ENCODE measurements at regions of chr16 and their contacts with region 1.

Region 1: DNA sequence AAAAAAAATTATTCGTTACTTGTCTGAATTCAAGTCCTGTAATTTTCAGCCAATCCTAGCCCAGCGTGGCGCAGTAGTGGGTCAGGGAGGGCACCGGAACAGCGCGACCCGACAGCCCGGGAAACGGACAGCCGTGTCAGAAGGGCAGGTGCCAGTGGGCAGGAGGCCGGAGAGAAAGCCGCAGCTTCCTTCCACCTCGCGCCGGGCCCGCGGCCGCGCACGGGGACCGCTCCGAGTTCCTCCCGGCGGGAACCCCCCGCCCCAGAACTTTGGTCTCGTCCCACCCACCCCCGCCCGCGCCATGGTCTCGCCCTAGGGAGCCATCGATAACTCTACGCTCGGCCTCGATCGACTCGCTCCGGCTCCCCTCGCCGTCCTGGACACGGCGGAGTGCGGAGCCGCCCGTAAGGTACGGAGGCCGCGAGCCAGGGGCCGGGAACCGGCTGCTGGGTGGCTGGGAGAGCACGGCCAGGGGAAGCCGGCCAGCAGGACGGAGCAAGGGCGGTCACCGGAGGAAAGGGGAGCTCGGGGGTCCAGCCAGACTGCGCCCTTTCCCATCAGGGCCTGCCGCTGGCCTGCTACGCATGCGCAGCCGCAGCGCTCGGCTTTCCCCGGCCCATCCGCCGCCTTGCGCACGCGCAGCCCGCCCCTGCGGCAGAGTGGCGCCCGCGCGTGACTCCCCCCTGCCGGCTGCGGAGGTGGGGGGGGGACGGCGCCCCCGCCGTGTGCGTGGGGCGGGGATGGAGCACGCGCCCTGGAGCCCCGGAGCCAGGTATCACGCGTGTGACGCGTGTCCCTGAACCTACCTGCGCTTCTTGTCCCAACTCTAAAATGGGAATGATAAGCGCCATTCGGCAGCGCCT is at the start of gene MLST8:
- DNase-seq: peak; percentile 86 to 99 (median 94)
- ATAC-seq: peak; percentile 84 to 86
- H3K4me3 Mint-ChIP-seq: peak within 1 kb of the TSS; percentile 75 to 90 (median 86)
- H3K27ac Mint-ChIP-seq: peak within 1 kb of the TSS; percentile 84 to 95 (median 92)
- H3K4me1 Mint-ChIP-seq: peaks cover 11 to 28% (median 25%) of the 10 kb centered on the region in 4 donors
- H3K27me3 Mint-ChIP-seq: peaks cover 0 to 1% (median 0%) of the 10 kb centered on the region in 5 donors
- polyA plus RNA-seq, gene MLST8: 29.9 to 40.4 (median 30.1) TPM

Region 2: DNA sequence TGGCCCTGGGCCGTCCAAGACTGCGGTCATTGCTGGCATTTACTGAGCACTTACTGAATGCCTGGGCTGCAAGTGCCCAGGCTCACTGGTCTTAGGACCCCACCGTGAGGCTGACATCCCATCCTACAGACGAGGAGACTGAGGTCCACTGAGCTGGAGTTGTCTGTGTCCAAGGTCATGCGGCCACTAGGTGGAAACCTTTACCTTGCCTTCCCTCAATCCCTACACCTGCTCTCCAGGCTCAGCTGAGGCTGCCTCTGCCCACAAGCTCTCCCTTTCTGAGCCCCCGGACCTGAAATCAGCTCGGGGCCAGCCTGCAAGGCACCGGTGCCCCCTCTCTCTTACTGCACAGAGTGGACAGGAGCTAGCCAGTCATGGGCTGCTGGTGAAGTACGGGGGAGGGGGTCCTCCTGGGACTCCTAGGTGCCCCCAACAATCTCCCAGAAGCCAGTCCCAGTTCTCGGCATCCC is 10.4 kb before region 1 on chr16:
- POLR2A ChIA-PET with region 1: interaction called, 12 read pairs
- DNase-seq: peak in 9 of 10 donors; percentile 35 to 80 (median 52)
- ATAC-seq: peak; percentile 79 to 82
- H3K4me3 Mint-ChIP-seq: peak overlapping the region in 9 of 10 donors; percentile 34 to 79 (median 59)
- H3K27ac Mint-ChIP-seq: peak overlapping the region in 3 of 10 donors; percentile 14 to 73 (median 20)
- H3K4me1 Mint-ChIP-seq: peaks cover 2 to 15% (median 7%) of the 10 kb centered on the region in 4 donors
- H3K27me3 Mint-ChIP-seq: peaks cover 6 to 27% (median 18%) of the 10 kb centered on the region in 5 donors

Region 3: GRCh38 chr16:2223375-2224182 is 18.2 kb after region 1 on chr16 and contains the start of gene E4F1:
- POLR2A ChIA-PET with region 1: interaction called, 13 read pairs
- DNase-seq: peak; percentile 92 to 99 (median 98)
- ATAC-seq: peak; percentile 95 to 97
- H3K4me3 Mint-ChIP-seq: peak within 1 kb of the TSS; percentile 79 to 93 (median 88)
- H3K27ac Mint-ChIP-seq: peak within 1 kb of the TSS; percentile 51 to 95 (median 90)
- H3K4me1 Mint-ChIP-seq: peaks cover 0 to 26% (median 13%) of the 10 kb centered on the region in 4 donors
- H3K27me3 Mint-ChIP-seq: no peaks in the 10 kb centered on the region
- polyA plus RNA-seq, gene E4F1: 8.7 to 19.2 (median 10.9) TPM

Region 4: DNA sequence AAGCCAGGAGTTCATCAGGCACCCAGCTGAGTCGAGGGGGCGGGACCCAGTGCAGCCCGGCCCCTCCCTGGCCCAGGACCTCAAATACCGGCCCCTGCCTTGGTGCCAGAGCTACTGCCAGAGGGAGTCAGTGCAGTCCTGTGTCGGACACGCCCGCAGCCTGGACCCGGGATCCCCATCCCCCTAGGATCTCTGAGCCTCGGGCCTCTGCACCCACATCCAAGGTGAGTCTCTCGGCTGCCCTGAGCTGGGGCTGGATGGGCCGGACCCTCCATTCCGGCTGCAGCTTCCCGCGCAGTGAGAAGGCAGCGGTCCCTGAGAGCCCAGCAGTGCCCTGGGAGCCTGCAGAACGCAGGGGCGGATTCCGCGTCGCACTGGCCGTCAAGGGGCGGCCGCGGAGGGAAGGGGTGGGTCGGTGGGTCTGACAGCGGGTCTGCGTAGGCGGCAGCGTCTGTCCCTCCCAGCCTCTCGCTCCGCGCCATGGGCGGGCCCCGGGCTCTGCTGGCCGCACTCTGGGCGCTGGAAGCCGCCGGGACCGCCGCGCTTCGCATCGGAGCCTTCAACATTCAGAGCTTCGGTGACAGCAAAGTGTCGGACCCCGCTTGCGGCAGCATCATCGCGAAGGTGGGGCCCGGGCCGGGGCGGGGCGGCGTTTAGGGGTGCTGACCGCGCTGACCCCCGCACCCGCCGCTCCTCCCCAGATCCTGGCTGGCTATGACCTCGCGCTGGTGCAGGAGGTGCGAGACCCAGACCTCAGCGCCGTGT is 31.2 kb after region 1 on chr16 and contains the start of gene DNASE1L2:
- POLR2A ChIA-PET with region 1: no interaction called
- DNase-seq: peak in 1 of 10 donors; percentile 56
- ATAC-seq: peak in 1 of 2 donors; percentile 32
- H3K4me3 Mint-ChIP-seq: no peak within 1 kb of the TSS
- H3K27ac Mint-ChIP-seq: no peak within 1 kb of the TSS
- H3K4me1 Mint-ChIP-seq: peaks cover 0 to 3% (median 0%) of the 10 kb centered on the region in 4 donors
- H3K27me3 Mint-ChIP-seq: peaks cover 0 to 8% (median 0%) of the 10 kb centered on the region in 5 donors
- polyA plus RNA-seq, gene DNASE1L2: not detected